Dendritic cell treated with granulocyte-macrophage colony-stimulating factor and Interleukin-4, amounts not matched to agents 40 ng/mL and 50 ng/mL, for 4 days (primary cell): ENCODE measurements at regions of chr4 and their contacts with region 1.

Region 1: DNA sequence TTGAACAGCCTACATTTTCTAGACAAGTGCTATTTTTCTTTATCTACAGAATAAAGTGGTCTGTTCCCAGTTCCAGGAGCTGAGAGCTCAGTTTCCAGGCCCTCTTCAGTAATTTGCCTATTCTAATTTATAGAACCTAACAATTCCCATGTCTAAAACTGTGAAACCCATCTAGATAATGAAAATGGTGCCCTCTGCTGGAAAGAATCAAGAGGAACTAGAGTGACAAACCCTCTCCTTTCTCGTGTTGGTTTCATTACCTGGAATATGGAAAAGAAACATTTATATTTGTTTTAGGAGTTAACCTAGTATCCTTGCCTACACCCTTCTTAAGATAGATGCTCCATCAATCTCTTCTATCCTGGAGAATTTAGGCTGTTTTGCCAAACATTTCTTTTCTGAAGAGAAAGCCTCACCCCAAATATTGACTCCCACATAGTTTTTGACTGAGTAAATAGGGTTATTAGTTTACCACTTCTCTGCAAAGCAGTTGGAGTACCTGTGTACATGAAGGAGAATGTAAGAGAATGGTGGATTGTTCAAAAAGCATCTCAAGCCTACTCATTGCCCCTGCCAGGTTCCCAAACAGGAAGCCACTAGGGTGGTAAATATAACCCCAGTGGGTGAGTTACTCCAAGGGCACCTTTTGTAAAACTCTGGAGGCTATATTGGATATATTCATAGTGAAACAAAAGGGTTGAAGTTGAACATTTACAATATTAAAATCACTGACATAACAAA is 121.6 kb downstream of the RASL11B start:
- H3K4me3 Mint-ChIP-seq: no peak overlapping the region
- H3K27ac Mint-ChIP-seq: no peak overlapping the region
- H3K4me1 Mint-ChIP-seq: peaks cover 9% of the 10 kb centered on the region
- H3K27me3 Mint-ChIP-seq: no peaks in the 10 kb centered on the region

Region 2: DNA sequence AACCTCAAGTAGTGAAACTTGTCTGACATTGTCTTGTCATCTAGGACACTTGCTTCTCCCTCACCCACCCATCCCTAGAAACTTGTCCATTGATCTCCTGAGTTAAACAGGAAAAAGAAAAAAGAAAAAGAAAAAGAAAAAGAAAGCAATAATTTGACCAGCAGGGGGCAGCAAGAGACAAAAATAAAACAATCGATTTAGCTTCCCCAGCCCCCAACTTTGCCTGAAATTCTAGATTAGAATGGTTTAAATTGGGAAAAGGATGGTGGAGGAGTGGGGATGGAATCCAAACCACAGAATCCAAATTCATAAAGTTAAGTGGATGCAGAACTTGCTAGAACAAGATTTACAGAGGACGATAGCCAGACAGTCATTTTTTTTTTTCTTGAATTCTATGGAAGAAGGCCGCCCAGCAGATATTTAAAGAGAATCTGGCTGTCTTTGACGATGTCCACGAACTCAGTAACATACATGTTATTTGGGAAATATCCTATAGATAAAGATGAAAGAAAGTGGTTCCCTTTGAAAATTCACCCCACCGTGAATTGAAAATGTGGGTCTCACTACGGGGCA is 607.5 kb before region 1 on chr4:
- intact Hi-C with region 1: loop called (anchors 2 kb)
- H3K4me3 Mint-ChIP-seq: no peak overlapping the region
- H3K27ac Mint-ChIP-seq: no peak overlapping the region
- H3K4me1 Mint-ChIP-seq: no peaks in the 10 kb centered on the region
- H3K27me3 Mint-ChIP-seq: peaks cover 3% of the 10 kb centered on the region

Region 3: DNA sequence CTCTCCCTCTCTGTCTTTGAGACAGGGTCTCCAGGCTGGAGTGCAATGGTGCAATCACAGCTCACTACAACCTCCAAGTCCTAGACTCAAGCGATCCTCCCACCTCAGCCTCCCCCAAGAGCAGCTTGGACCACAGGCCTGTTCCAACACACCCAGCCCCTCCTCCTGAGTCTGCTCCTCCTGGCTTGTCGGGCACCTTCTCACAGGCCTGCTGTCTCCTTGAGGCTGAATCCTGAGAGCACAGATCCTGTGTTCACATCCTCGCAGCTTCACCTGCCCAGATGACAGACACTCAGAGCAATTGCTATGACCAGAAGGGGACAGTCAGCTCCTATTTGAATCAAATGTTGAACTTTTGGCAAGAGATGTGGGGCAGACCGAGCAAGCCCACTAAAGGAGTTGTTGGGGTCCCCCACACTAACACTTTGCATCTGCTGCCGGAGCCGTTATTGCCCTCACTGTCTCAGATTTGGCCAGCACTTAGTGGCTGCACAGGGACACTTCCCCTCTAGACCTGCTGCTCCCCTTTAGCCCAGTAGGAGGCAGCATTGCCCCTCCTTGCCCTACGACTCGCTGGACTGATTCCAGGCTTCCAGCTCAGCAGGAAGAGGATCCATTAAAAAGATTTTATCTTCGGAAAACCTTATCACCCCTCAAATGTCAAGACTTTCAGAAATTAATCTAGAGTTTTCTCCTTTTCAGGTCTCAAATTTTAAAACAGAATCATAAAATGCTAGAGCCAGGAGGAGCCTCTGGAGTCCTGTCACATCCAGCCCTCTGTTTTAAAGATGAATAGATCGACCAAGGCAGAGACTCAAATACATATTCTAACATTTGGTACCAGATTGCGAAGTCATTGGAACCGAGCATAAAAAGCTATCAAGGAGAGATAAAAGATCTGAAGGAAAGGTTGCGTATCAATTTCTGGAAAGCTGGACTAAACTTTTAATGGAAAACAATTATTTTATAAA is 438.3 kb before region 1 on chr4:
- intact Hi-C with region 1: loop called (anchors 2 kb)
- H3K4me3 Mint-ChIP-seq: no peak overlapping the region
- H3K27ac Mint-ChIP-seq: no peak overlapping the region
- H3K4me1 Mint-ChIP-seq: no peaks in the 10 kb centered on the region
- H3K27me3 Mint-ChIP-seq: no peaks in the 10 kb centered on the region

Region 4: GRCh38 chr4:52588097-52588782 is 395.5 kb before region 1 on chr4:
- intact Hi-C with region 1: loop called (anchors 2 kb)
- H3K4me3 Mint-ChIP-seq: no peak overlapping the region
- H3K27ac Mint-ChIP-seq: no peak overlapping the region
- H3K4me1 Mint-ChIP-seq: no peaks in the 10 kb centered on the region
- H3K27me3 Mint-ChIP-seq: peaks cover 1% of the 10 kb centered on the region